ENCODE measurements at regions of chr9 and their contacts with region 1.

Region 1: GRCh38 chr9:109903515-109904138 is 123.6 kb downstream of the PALM2AKAP2 start:
- DNase-seq: peak; percentile 83
- H3K4me3 Mint-ChIP-seq: no peak overlapping the region
- H3K27ac Mint-ChIP-seq: no peak overlapping the region
- H3K4me1 Mint-ChIP-seq: peaks cover 11% of the 10 kb centered on the region
- H3K27me3 Mint-ChIP-seq: no peaks in the 10 kb centered on the region

Region 2: GRCh38 chr9:109574068-109574882 is 329.4 kb before region 1 on chr9:
- CTCF ChIA-PET with region 1: no interaction called
- intact Hi-C with region 1: loop called (anchors 2 kb)
- DNase-seq: peak; percentile 50
- H3K4me3 Mint-ChIP-seq: no peak overlapping the region
- H3K27ac Mint-ChIP-seq: no peak overlapping the region
- H3K4me1 Mint-ChIP-seq: no peaks in the 10 kb centered on the region
- H3K27me3 Mint-ChIP-seq: peaks cover 7% of the 10 kb centered on the region

Region 3: GRCh38 chr9:109918339-109919163 is 14.9 kb after region 1 on chr9:
- CTCF ChIA-PET with region 1: interaction called, 14 read pairs
- intact Hi-C with region 1: no loop called
- DNase-seq: peak; percentile 64
- H3K4me3 Mint-ChIP-seq: peak overlapping the region; percentile 44
- H3K27ac Mint-ChIP-seq: peak overlapping the region; percentile 92
- H3K4me1 Mint-ChIP-seq: peaks cover 24% of the 10 kb centered on the region
- H3K27me3 Mint-ChIP-seq: no peaks in the 10 kb centered on the region

Region 4: DNA sequence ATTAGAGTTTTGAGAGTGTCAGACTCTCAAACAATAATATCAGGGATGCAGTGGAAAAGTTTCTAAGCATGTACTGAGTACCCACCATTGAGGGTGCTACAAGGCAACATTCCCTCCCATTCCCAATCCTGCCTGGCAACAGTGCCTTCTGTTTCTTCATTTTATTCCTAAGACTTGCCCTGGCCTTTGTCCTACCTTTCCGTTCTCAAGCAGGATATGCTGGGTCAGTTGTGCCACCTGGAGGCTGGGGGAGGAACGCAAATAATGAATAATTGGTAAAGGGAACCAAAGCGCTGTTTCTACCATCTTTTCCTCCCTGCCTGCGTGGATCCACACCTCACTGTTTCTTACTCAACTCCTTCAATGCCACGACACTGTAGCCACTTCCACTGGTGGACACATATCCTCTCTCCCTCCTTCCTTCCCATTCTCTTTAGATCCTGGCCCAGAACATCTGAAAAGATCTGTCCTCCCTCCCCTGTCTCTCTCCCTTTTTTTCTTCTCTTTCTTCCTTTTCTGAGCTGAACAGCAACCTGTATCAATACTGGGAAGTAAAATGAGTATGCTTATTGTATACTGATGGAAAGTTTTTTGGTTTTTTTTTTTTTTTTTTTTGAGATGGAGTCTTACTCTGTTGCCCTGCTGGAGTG is 154.8 kb after region 1 on chr9:
- CTCF ChIA-PET with region 1: interaction called, 87 read pairs
- intact Hi-C with region 1: loop called (anchors 1 kb)
- DNase-seq: peak; percentile 74
- H3K4me3 Mint-ChIP-seq: no peak overlapping the region
- H3K27ac Mint-ChIP-seq: no peak overlapping the region
- H3K4me1 Mint-ChIP-seq: peaks cover 9% of the 10 kb centered on the region
- H3K27me3 Mint-ChIP-seq: peaks cover 2% of the 10 kb centered on the region

Region 5: DNA sequence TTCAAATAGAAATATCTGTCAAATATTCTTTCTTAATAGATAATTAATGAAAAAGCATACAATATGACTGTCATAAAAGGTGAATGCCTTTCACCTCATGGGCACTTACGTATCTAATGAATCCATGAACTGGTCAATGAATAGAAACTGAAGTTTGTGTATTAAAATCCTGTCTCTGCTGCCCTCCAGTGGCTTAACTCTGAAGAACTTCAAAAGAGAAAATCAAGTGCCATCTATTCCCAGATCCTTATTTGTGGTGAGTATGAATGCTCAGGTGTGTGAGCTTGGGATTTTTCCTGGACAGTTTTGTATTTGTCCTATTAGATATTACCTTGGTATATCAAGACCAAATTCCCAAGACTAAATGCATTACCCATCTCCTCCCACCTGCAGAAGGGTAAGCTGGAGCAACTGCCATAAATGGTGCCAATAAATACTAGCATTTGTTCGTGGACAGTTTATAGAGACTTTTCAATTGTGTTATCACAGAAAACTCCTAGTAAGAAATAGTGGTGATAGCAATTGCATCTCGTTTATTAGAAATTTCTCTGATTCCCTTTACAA is 719.9 kb after region 1 on chr9:
- CTCF ChIA-PET with region 1: no interaction called
- intact Hi-C with region 1: loop called (anchors 1 kb)
- DNase-seq: peak; percentile 32
- H3K4me3 Mint-ChIP-seq: no peak overlapping the region
- H3K27ac Mint-ChIP-seq: no peak overlapping the region
- H3K4me1 Mint-ChIP-seq: peaks cover 7% of the 10 kb centered on the region
- H3K27me3 Mint-ChIP-seq: peaks cover 2% of the 10 kb centered on the region

Measured in activated naive CD4-positive, alpha-beta T cell treated with anti-CD3 and anti-CD28 coated beads for 36 hours (primary cell).